ENCODE measurements at regions of chr11 and their contacts with region 1.

Region 1: DNA sequence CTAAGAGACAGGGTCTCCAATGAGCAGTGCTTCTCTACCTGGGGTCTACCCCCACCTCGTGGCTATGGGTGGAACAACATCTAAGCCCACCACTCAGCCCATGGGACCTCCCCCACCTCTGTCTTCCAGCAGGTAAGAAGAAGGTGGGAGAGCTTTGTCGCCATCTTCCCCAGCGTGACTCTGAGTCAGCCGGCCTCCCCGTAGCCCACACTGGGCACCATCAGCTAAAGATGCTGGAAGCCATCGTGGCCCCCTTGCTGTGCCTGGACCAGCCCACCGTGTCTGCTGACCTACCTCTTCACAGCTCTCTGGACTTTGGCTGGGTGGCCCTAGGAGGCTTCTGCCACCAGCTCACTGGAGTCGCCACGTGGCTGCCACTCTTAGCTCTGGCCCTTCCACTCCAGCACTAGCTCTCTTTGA is 954 bp downstream of the C11orf86 start:
- DNase-seq: peak in 1 of 2 experiments; percentile 53
- ATAC-seq: peak; percentile 33 to 44; a peak in 5 of 6 replicates
- H3K4me3 ChIP-seq: no peak overlapping the region
- H3K27ac ChIP-seq: peak overlapping the region; percentile 95 to 99
- H3K4me1 ChIP-seq: peaks cover 61% of the 10 kb centered on the region
- CTCF ChIP-seq: peak; percentile 79
- EP300 ChIP-seq: no peak
- POLR2A ChIP-seq: no peak
- RAD21 ChIP-seq: peak; percentile 84 to 88

Region 2: GRCh38 chr11:66638177-66639065 is 337.6 kb before region 1 on chr11 and contains the start of gene RBM4:
- CTCF ChIA-PET with region 1: no interaction called
- POLR2A ChIA-PET with region 1: no interaction called
- DNase-seq: peak; percentile 99 to 100
- ATAC-seq: peak; percentile 95
- H3K4me3 ChIP-seq: peak within 1 kb of the TSS; percentile 71
- H3K27ac ChIP-seq: peak within 1 kb of the TSS; percentile 88 to 91
- H3K4me1 ChIP-seq: peaks cover 44% of the 10 kb centered on the region
- CTCF ChIP-seq: 0 out of 3 replicates have a peak, but pooled peaks have one; percentile 6
- EP300 ChIP-seq: no peak
- POLR2A ChIP-seq: peak; percentile 73
- RAD21 ChIP-seq: no peak
- polyA plus RNA-seq, gene RBM4: 190 and 264 TPM in 2 replicates

Region 3: DNA sequence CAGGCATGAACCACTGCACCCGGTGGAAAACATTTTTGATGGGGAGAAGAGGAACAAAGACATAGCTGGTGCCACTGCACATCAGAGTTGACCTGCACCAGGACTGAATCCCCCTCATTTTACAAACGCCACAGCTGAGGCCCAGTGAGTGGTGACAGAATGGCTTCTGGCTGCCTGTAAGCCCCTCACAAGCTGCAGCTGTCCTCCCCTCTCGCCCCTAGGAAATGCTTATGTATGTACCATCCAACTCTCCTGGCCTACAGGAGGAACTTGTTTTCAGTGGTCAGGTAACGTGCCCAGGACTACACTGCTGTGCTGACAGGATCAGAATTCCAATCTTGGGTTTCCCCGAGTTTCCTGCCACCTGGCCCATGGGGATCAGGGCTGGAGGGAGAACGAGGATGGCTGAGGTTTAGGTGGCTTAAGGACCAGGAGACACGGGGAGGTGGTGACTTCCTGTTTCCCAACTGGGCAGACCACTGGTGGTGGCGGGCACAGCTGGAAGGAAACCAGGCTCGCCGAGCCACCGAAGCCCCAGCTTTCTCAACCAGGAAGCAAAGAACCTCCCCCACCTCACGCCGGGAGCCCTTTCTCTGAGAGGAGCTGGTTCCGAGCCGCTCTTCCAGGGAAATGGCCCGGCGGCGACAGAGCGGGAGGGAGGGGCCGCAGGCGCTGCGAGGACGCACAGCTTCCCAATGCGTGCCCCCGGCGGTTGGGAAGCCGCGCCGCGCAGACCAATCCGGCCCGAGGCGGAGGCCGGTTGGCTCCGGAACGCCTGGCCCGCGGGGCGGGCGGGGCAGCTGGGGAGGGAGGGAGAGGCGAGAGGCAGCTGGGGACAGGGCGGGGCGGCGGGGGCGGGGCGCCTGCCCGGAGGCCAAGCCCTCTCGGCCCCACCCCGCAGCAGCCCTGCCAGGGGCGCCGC is 120.2 kb before region 1 on chr11:
- CTCF ChIA-PET with region 1: interaction called, 17 read pairs
- POLR2A ChIA-PET with region 1: interaction called, 5 read pairs
- DNase-seq: peak; percentile 87 to 93
- ATAC-seq: peak; percentile 45 to 82
- H3K4me3 ChIP-seq: peak overlapping the region; percentile 74
- H3K27ac ChIP-seq: peak overlapping the region; percentile 93 to 97
- H3K4me1 ChIP-seq: peaks cover 34% of the 10 kb centered on the region
- CTCF ChIP-seq: no peak
- EP300 ChIP-seq: no peak
- POLR2A ChIP-seq: peak; percentile 43
- RAD21 ChIP-seq: peak in 1 of 2 experiments; percentile 28; a peak in 1 of 5 replicates

Region 4: GRCh38 chr11:66883016-66883968 is 92.8 kb before region 1 on chr11:
- CTCF ChIA-PET with region 1: interaction called, 33 read pairs
- POLR2A ChIA-PET with region 1: interaction called, 5 read pairs
- DNase-seq: peak; percentile 85 to 93
- ATAC-seq: peak; percentile 65 to 79
- H3K4me3 ChIP-seq: no peak overlapping the region
- H3K27ac ChIP-seq: peak overlapping the region; percentile 95 to 97
- H3K4me1 ChIP-seq: peaks cover 99% of the 10 kb centered on the region
- CTCF ChIP-seq: peak; percentile 87
- EP300 ChIP-seq: peak in 1 of 2 experiments; percentile 15; a peak in 1 of 5 replicates
- POLR2A ChIP-seq: no peak
- RAD21 ChIP-seq: peak; percentile 79 to 85

Region 5: DNA sequence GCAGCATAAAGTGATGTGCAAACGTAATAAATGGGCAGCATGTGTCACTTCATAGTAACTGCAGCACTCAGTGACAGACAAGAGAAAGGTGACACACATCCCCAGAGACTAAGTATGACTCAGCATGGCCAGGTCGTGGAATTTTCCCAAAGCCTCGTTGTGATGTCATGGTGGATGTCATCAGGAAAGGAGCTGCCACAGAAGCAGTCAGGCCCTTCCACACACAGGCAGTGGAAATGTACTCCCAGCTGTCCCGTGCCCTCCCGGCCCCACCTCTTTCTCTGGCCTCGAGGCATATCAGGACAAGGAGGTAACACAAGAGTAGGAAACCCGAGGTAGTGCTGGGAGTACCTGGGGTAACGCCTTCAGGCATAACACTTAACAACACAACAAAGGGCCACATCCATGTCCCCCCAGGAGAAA is 25.9 kb before region 1 on chr11:
- CTCF ChIA-PET with region 1: interaction called, 19 read pairs
- POLR2A ChIA-PET with region 1: no interaction called
- DNase-seq: peak; percentile 93 to 97
- ATAC-seq: peak; percentile 90 to 98
- H3K4me3 ChIP-seq: no peak overlapping the region
- H3K27ac ChIP-seq: peak overlapping the region; percentile 88
- H3K4me1 ChIP-seq: peaks cover 55% of the 10 kb centered on the region
- CTCF ChIP-seq: no peak
- EP300 ChIP-seq: peak; percentile 30 to 37; a peak in 2 of 5 replicates
- POLR2A ChIP-seq: no peak
- RAD21 ChIP-seq: peak; percentile 2 to 42; a peak in 4 of 5 replicates

Region 6: DNA sequence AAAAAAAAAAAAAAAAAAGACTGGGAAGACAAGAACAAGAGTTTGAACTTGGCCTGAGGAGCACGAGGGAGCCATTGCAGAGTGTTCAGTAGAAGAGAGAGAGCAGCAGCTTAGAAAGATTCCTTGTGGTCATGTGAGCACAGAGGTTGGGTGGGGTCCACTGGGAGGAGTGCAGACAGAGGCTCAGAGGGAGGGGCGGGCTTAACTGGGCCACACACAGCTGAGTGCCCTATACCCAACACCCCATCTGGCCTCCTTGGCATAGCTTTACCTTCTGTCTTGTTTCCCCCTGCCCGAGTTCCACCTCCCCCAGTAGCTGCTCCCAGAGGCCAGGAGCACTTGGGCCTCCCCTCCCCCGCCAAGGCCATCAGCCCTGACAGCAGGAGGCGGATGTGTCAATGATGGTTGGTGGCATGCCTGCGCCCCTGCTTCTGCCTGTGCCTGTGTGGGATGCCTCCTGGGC is 11.1 kb after region 1 on chr11:
- CTCF ChIA-PET with region 1: interaction called, 13 read pairs
- POLR2A ChIA-PET with region 1: no interaction called
- DNase-seq: no peak
- ATAC-seq: peak in 1 of 2 experiments; percentile 31; a peak in 3 of 6 replicates
- H3K4me3 ChIP-seq: no peak overlapping the region
- H3K27ac ChIP-seq: peak overlapping the region; percentile 39 to 79; a peak in 4 of 6 replicates
- H3K4me1 ChIP-seq: peaks cover 42% of the 10 kb centered on the region
- CTCF ChIP-seq: no peak
- EP300 ChIP-seq: no peak
- POLR2A ChIP-seq: no peak
- RAD21 ChIP-seq: no peak

Region 7: GRCh38 chr11:67022328-67022927 is 46.4 kb after region 1 on chr11:
- CTCF ChIA-PET with region 1: interaction called, 12 read pairs
- POLR2A ChIA-PET with region 1: no interaction called
- DNase-seq: peak in 1 of 2 experiments; percentile 45
- ATAC-seq: peak in 1 of 2 experiments; percentile 15; a peak in 3 of 6 replicates
- H3K4me3 ChIP-seq: peak overlapping the region; percentile 66; the same call in 2 of the 3 replicates
- H3K27ac ChIP-seq: peak overlapping the region; percentile 72 to 87; a peak in 5 of 6 replicates
- H3K4me1 ChIP-seq: peaks cover 24% of the 10 kb centered on the region
- CTCF ChIP-seq: no peak
- EP300 ChIP-seq: no peak
- POLR2A ChIP-seq: no peak
- RAD21 ChIP-seq: no peak